ENCODE measurements at regions of chr1 and their contacts with region 1.

Region 1: GRCh38 chr1:111222308-111223125 is 5.0 kb upstream of the CHI3L2 start:
- DNase-seq: peak; percentile 91
- ATAC-seq: peak; percentile 24
- H3K4me3 Mint-ChIP-seq: peak overlapping the region; percentile 62
- H3K27ac Mint-ChIP-seq: peak overlapping the region; percentile 88
- H3K4me1 Mint-ChIP-seq: peaks cover 93% of the 10 kb centered on the region
- H3K27me3 Mint-ChIP-seq: no peaks in the 10 kb centered on the region

Region 2: GRCh38 chr1:110630839-110631663 is 591.5 kb before region 1 on chr1:
- CTCF ChIA-PET with region 1: no interaction called
- POLR2A ChIA-PET with region 1: interaction called, 3 read pairs
- intact Hi-C with region 1: loop called in 1 of 2 experiments (anchors 5 kb)
- DNase-seq: peak; percentile 93
- ATAC-seq: peak; percentile 76
- H3K4me3 Mint-ChIP-seq: no peak overlapping the region
- H3K27ac Mint-ChIP-seq: no peak overlapping the region
- H3K4me1 Mint-ChIP-seq: peaks cover 55% of the 10 kb centered on the region
- H3K27me3 Mint-ChIP-seq: no peaks in the 10 kb centered on the region

Region 3: GRCh38 chr1:110963691-110964399 is 258.7 kb before region 1 on chr1 and contains the start of gene LRIF1:
- CTCF ChIA-PET with region 1: no interaction called
- POLR2A ChIA-PET with region 1: no interaction called
- intact Hi-C with region 1: loop called in 1 of 2 experiments (anchors 5 kb)
- DNase-seq: peak; percentile 100
- ATAC-seq: peak; percentile 99
- H3K4me3 Mint-ChIP-seq: peak within 1 kb of the TSS; percentile 78
- H3K27ac Mint-ChIP-seq: peak within 1 kb of the TSS; percentile 94
- H3K4me1 Mint-ChIP-seq: peaks cover 30% of the 10 kb centered on the region
- H3K27me3 Mint-ChIP-seq: peaks cover 7% of the 10 kb centered on the region
- total RNA-seq, gene LRIF1: 15.1 to 15.4 TPM

Region 4: GRCh38 chr1:111203681-111204200 is 18.8 kb before region 1 on chr1:
- CTCF ChIA-PET with region 1: interaction called, 115 read pairs
- POLR2A ChIA-PET with region 1: interaction called, 8 read pairs
- intact Hi-C with region 1: no loop called
- DNase-seq: peak; percentile 92
- ATAC-seq: peak; percentile 27
- H3K4me3 Mint-ChIP-seq: peak overlapping the region; percentile 96
- H3K27ac Mint-ChIP-seq: peak overlapping the region; percentile 98
- H3K4me1 Mint-ChIP-seq: peaks cover 56% of the 10 kb centered on the region
- H3K27me3 Mint-ChIP-seq: no peaks in the 10 kb centered on the region

Region 5: DNA sequence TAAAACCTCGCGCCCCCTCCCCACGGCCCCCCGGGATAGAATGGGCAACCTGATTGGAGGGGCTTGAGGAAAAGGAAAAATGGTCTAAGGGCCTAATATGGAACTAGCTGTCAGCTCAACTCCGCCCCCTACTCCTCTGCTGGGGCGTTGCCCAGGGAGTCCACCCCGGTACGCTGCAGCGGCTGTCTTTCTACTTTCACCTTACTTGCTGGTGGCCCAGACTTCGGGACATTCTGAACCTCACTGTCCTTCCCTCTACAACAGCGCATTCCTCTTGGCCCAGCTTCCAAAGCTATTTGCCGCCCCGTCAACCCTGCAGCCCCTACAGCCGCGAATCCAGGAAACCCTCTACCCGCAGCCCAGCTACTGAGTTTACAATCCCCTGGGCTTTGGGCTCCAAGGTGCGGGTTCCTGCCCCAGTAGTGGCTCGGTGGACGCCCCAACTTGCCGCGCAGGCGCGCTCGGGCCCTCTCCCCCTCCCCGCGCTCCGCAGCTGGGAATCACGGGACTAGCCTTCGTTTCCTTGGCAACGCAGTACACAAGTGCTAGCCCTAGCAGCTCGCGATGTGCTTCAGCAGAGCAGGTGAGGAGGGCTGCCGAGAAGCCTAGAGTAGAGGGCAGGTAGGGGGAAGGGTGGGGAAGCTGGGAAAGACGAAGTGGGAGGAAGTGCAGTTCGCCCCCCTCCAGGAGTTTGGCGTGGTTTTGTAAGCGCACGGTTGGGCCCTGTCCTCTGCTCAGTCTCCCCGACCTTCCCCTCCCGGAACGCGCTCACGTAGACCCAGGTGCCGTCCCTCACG is 123.8 kb after region 1 on chr1:
- CTCF ChIA-PET with region 1: interaction called, 7 read pairs
- POLR2A ChIA-PET with region 1: no interaction called
- intact Hi-C with region 1: loop called (anchors 5 kb)
- DNase-seq: peak; percentile 88
- ATAC-seq: peak; percentile 97
- H3K4me3 Mint-ChIP-seq: peak overlapping the region; percentile 78
- H3K27ac Mint-ChIP-seq: peak overlapping the region; percentile 68
- H3K4me1 Mint-ChIP-seq: peaks cover 17% of the 10 kb centered on the region
- H3K27me3 Mint-ChIP-seq: no peaks in the 10 kb centered on the region

Region 6: DNA sequence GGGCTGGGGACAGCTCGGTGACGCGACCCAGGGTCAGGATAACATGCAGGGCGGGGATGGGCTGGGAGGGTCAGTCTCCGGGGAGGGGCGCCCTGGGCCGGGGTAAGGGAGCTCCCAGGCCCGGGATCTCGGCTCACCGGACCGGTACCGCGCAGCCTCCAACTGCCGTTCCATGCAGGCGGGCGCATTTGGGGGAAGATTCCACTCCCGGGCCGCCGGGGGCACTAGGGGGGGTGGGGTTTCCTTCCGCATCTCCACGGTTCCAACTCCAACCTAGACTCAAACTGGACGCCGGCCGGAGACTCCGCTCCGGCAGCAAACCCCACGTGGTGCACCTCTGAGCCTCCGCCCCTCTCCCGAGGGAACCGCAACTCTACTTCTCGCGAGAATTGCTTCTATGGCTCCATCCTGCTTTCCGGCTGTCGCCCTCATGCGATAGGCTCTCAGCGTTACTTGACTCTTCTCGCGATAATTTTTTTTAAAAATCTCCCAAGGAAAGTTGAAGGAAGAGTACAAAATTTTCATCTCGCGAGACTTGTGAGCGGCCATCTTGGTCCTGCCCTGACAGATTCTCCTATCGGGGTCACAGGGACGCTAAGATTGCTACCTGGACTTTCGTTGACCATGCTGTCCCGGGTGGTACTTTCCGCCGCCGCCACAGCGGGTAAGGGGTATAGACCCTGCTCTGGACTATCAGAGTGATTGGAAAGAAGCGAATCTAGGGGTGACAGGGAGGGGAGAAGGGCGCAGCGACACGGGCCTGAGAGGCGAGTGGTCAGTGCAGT is 226.6 kb after region 1 on chr1 and contains the starts of genes ATP5PB and WDR77:
- CTCF ChIA-PET with region 1: interaction called, 4 read pairs
- POLR2A ChIA-PET with region 1: no interaction called
- intact Hi-C with region 1: loop called (anchors 2 to 5 kb)
- DNase-seq: peak; percentile 94
- ATAC-seq: peak; percentile 98
- H3K4me3 Mint-ChIP-seq: peak within 1 kb of the TSS; percentile 99
- H3K27ac Mint-ChIP-seq: peak within 1 kb of the TSS; percentile 98
- H3K4me1 Mint-ChIP-seq: peaks cover 79% of the 10 kb centered on the region
- H3K27me3 Mint-ChIP-seq: no peaks in the 10 kb centered on the region
- total RNA-seq, gene ATP5PB: 292 to 301 TPM
- total RNA-seq, gene WDR77: 42.5 to 53.6 TPM

Measured in activated CD4-positive, alpha-beta T cell treated with anti-CD3 and anti-CD28 coated beads for 36 hours (primary cell).